ENCODE measurements at regions of chr7 and their contacts with region 1.

Region 1: DNA sequence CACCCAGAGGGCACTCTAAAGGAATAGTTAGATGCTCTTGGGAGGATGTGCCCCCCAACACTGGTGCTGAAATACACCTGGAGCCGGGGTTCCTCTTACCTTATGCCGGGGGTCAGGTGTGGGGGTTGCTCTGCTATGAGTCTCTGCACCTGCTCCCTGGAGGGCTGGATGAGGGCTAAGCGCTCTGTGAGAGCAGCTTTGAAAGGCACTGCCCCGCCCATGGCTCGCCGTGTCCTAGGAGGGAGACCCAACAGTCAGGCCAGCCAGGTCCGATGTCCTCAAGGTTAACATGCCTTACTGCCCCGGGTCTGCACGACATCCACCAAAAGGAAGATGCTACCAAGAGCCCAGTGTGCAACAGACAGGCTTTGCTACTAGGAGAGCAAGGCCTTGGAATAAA is 31.7 kb downstream of the PSPH start:
- DNase-seq: no peak
- H3K4me3 ChIP-seq: no peak overlapping the region
- H3K27ac ChIP-seq: no peak overlapping the region
- H3K4me1 ChIP-seq: no peaks in the 10 kb centered on the region
- H3K27me3 ChIP-seq: no peaks in the 10 kb centered on the region
- CTCF ChIP-seq: no peak

Region 2: DNA sequence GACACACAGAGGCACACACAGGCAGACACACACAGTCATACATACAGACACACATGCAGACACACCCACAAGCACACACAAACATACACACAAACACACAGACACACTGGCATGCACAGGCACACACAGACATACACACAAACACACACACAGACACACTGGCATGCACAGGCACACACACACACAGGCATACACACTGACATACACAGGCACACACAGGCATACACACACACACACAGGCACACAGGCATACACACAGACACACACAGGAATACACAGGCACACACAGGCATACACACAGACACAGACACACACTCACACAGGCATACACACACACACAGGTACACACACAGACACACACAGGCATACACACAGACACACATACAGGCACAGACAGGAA is 1818.0 kb before region 1 on chr7:
- CTCF ChIA-PET with region 1: no interaction called
- POLR2A ChIA-PET with region 1: interaction called, 15 read pairs
- intact Hi-C with region 1: no loop called
- DNase-seq: no peak
- H3K4me3 ChIP-seq: no peak overlapping the region
- H3K27ac ChIP-seq: no peak overlapping the region
- H3K4me1 ChIP-seq: no peaks in the 10 kb centered on the region
- H3K27me3 ChIP-seq: no peaks in the 10 kb centered on the region
- CTCF ChIP-seq: no peak